HepG2 (cell line): ENCODE measurements at regions of chr9 and their contacts with region 1.

Region 1: GRCh38 chr9:35882263-35882848 is 12.2 kb upstream of the OR13J1 start:
- DNase-seq: peak; percentile 62
- ATAC-seq: peak; percentile 84
- H3K4me3 ChIP-seq: no peak overlapping the region
- H3K27ac ChIP-seq: no peak overlapping the region
- H3K4me1 ChIP-seq: peaks cover 9% of the 10 kb centered on the region; the same call in 1 of the 2 replicates
- H3K27me3 ChIP-seq: no peaks in the 10 kb centered on the region
- CTCF ChIP-seq: peak; percentile 87
- EP300 ChIP-seq: no peak
- POLR2A ChIP-seq: no peak
- RAD21 ChIP-seq: peak; percentile 53; the same call in 1 of the 2 replicates

Region 2: GRCh38 chr9:35646533-35647265 is 235.7 kb before region 1 on chr9:
- CTCF ChIA-PET with region 1: no interaction called
- POLR2A ChIA-PET with region 1: no interaction called
- in situ Hi-C with region 1: no loop called
- intact Hi-C with region 1: loop called (anchors 10 kb)
- DNase-seq: peak; percentile 78
- ATAC-seq: peak; percentile 95
- H3K4me3 ChIP-seq: peak overlapping the region; percentile 70 to 83 (median 72)
- H3K27ac ChIP-seq: peak overlapping the region; percentile 67
- H3K4me1 ChIP-seq: peaks cover 55% of the 10 kb centered on the region
- H3K27me3 ChIP-seq: peaks cover 2 to 22% of the 10 kb centered on the region in 2 experiments; a peak in 3 of 5 replicates
- CTCF ChIP-seq: peak; percentile 98
- EP300 ChIP-seq: no peak
- POLR2A ChIP-seq: peak; percentile 64 to 81
- RAD21 ChIP-seq: peak; percentile 93

Region 3: GRCh38 chr9:35790385-35791296 is 91.7 kb before region 1 on chr9:
- CTCF ChIA-PET with region 1: interaction called, 26 read pairs
- POLR2A ChIA-PET with region 1: no interaction called
- in situ Hi-C with region 1: loop called (anchors 5 kb)
- intact Hi-C with region 1: loop called (anchors 2 kb)
- DNase-seq: peak; percentile 49
- ATAC-seq: peak; percentile 94
- H3K4me3 ChIP-seq: no peak overlapping the region
- H3K27ac ChIP-seq: no peak overlapping the region
- H3K4me1 ChIP-seq: no peaks in the 10 kb centered on the region; the same call in 1 of the 2 replicates
- H3K27me3 ChIP-seq: no peaks in the 10 kb centered on the region
- CTCF ChIP-seq: peak; percentile 94
- EP300 ChIP-seq: no peak
- POLR2A ChIP-seq: no peak
- RAD21 ChIP-seq: peak; percentile 82

Region 4: DNA sequence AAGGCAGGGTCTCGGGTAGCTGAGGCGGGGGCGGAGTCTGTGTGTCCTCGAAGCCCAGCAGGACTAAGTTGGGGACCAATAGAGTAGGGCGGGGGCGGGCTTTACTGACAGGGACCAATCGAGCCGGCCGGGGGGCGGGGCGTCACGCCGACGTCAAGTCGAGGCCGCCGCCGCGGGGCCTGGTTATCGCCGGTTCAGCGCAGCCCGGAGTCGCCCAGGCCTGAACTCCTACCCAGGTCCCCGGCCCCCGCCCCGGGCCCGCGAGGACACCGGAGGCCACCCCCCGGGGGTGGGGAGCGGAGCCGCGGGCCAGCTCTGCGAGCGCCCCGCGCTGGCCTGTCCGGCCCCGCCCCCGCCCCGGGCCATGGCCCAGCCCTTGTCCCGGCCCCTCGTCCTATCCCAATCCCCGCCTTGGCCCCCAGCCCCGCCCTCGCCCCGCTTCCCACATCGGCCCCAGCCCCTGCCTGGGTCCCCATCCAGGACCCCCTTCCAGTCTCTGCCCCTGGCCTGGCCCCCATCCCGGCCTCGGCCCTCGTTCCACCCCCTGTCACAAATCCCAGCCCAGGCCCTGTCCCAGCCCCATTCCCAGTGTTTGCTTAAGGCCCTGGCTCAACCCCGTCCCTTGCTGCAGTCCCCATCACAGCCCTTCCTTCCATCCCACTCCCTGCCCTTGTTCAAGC is 53.1 kb before region 1 on chr9 and contains the start of gene TMEM8B:
- CTCF ChIA-PET with region 1: interaction called, 24 read pairs
- POLR2A ChIA-PET with region 1: interaction called, 3 read pairs
- in situ Hi-C with region 1: loop called (anchors 5 kb)
- intact Hi-C with region 1: loop called (anchors 1 kb)
- DNase-seq: peak; percentile 83
- ATAC-seq: peak; percentile 90
- H3K4me3 ChIP-seq: peak within 1 kb of the TSS; percentile 61 to 81 (median 73)
- H3K27ac ChIP-seq: peak within 1 kb of the TSS; percentile 44
- H3K4me1 ChIP-seq: peaks cover 45% of the 10 kb centered on the region
- H3K27me3 ChIP-seq: no peaks in the 10 kb centered on the region
- CTCF ChIP-seq: no peak
- EP300 ChIP-seq: no peak
- POLR2A ChIP-seq: no peak
- RAD21 ChIP-seq: no peak
- total RNA-seq, gene TMEM8B: 1.5 and 2.1 TPM in 2 replicates

Region 5: DNA sequence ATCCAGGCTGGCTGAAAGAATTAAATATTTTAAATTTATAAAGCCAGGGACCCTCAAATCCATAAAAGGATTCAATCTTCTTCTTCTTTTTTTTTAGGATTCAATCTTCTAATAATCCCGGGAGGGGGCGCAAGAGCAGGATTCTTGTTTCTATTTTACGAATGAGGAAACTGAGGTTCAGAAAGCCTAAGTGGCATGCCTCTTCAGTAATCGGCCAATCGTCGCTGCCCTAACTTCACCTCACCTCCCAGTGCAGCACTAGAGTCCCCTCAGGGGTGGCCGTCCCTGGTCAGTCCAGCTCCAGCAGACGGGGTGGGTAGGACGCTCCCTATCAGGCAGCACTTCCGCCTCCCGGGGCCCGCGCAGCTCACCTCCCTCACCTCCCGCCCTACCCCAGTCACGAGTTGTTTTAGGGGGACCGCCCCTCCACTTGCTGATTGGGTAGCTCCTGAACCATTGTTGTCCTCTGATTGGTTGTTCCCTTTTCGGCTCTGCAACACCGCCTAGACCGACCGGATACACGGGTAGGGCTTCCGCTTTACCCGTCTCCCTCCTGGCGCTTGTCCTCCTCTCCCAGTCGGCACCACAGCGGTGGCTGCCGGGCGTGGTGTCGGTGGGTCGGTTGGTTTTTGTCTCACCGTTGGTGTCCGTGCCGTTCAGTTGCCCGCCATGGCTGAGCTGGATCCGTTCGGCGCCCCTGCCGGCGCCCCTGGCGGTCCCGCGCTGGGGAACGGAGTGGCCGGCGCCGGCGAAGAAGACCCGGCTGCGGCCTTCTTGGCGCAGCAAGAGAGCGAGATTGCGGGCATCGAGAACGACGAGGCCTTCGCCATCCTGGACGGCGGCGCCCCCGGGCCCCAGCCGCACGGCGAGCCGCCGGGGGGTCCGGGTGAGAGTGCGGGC is 308.3 kb after region 1 on chr9 and contains the start of gene CLTA:
- CTCF ChIA-PET with region 1: no interaction called
- POLR2A ChIA-PET with region 1: no interaction called
- in situ Hi-C with region 1: no loop called
- intact Hi-C with region 1: no loop called
- DNase-seq: peak; percentile 99
- ATAC-seq: peak; percentile 98
- H3K4me3 ChIP-seq: peak within 1 kb of the TSS; percentile 84 to 86 (median 85)
- H3K27ac ChIP-seq: peak within 1 kb of the TSS; percentile 76
- H3K4me1 ChIP-seq: peaks cover 36% of the 10 kb centered on the region
- H3K27me3 ChIP-seq: no peaks in the 10 kb centered on the region; a peak in 1 of 5 replicates
- CTCF ChIP-seq: peak; percentile 51
- EP300 ChIP-seq: 0 out of 4 replicates have a peak, but pooled peaks of 1 of the 2 experiments have one; percentile 8
- POLR2A ChIP-seq: peak; percentile 95 to 98
- RAD21 ChIP-seq: peak; percentile 33; the same call in 1 of the 2 replicates
- total RNA-seq, gene CLTA: 222 and 227 TPM in 2 replicates